ENCODE measurements at regions of chr2 and their contacts with region 1.

Region 1: GRCh38 chr2:161223139-161223732 is 63.0 kb downstream of the TANK start:
- DNase-seq: peak in 4 of 9 experiments; percentile 20 to 69 (median 44)
- ATAC-seq: peak; percentile 87
- H3K4me3 ChIP-seq: no peak overlapping the region
- H3K4me3 Mint-ChIP-seq: no peak overlapping the region
- H3K27ac ChIP-seq: no peak overlapping the region
- H3K27ac Mint-ChIP-seq: no peak overlapping the region
- H3K4me1 ChIP-seq: no peaks in the 10 kb centered on the region
- H3K4me1 Mint-ChIP-seq: no peaks in the 10 kb centered on the region
- H3K27me3 ChIP-seq: no peaks in the 10 kb centered on the region
- H3K27me3 Mint-ChIP-seq: no peaks in the 10 kb centered on the region
- CTCF ChIP-seq: peak; percentile 94

Region 2: DNA sequence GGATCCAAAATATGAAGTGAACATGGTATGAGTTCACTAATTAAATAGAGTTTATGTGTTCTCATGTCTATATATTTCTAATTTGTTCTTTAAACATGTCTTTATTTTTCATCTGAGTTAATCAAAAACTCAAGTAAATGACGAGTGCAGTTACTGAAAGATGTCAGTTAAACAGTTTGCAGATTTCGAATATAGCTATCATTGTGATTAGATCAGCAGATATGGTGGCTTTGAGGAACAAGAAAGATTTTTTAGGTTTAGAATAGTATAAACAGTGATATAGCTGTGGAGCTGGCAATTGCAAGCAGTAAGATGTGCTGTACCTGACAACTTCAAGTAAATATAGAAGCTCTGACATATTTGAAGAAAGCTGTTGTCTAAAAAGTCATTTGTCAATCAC is 13.3 kb before region 1 on chr2:
- CTCF ChIA-PET with region 1: interaction called, 4 read pairs
- POLR2A ChIA-PET with region 1: no interaction called
- intact Hi-C with region 1: loop called in 1 of 2 experiments (anchors 2 kb)
- DNase-seq: no peak
- ATAC-seq: no peak
- H3K4me3 ChIP-seq: no peak overlapping the region
- H3K4me3 Mint-ChIP-seq: no peak overlapping the region
- H3K27ac ChIP-seq: no peak overlapping the region
- H3K27ac Mint-ChIP-seq: no peak overlapping the region
- H3K4me1 ChIP-seq: no peaks in the 10 kb centered on the region
- H3K4me1 Mint-ChIP-seq: peaks cover 3% of the 10 kb centered on the region
- H3K27me3 ChIP-seq: no peaks in the 10 kb centered on the region
- H3K27me3 Mint-ChIP-seq: no peaks in the 10 kb centered on the region
- CTCF ChIP-seq: no peak

Region 3: GRCh38 chr2:161238560-161239325 is 15.5 kb after region 1 on chr2:
- CTCF ChIA-PET with region 1: interaction called, 9 read pairs
- POLR2A ChIA-PET with region 1: no interaction called
- intact Hi-C with region 1: loop called in 1 of 2 experiments (anchors 1 kb)
- DNase-seq: peak; percentile 18 to 74 (median 68)
- ATAC-seq: peak; percentile 71
- H3K4me3 ChIP-seq: peak overlapping the region; percentile 56 to 64
- H3K4me3 Mint-ChIP-seq: peak overlapping the region; percentile 92
- H3K27ac ChIP-seq: no peak overlapping the region
- H3K27ac Mint-ChIP-seq: peak overlapping the region; percentile 78
- H3K4me1 ChIP-seq: peaks cover 16% of the 10 kb centered on the region
- H3K4me1 Mint-ChIP-seq: peaks cover 49% of the 10 kb centered on the region
- H3K27me3 ChIP-seq: peaks cover 0 to 4% of the 10 kb centered on the region in 2 experiments
- H3K27me3 Mint-ChIP-seq: peaks cover 2% of the 10 kb centered on the region
- CTCF ChIP-seq: no peak

Region 4: GRCh38 chr2:161273038-161273760 is 50.0 kb after region 1 on chr2:
- CTCF ChIA-PET with region 1: interaction called, 73 read pairs
- POLR2A ChIA-PET with region 1: no interaction called
- intact Hi-C with region 1: loop called (anchors 1 kb)
- DNase-seq: peak in 3 of 9 experiments; percentile 51 to 77 (median 72)
- ATAC-seq: peak; percentile 69
- H3K4me3 ChIP-seq: no peak overlapping the region
- H3K4me3 Mint-ChIP-seq: no peak overlapping the region
- H3K27ac ChIP-seq: no peak overlapping the region
- H3K27ac Mint-ChIP-seq: no peak overlapping the region
- H3K4me1 ChIP-seq: no peaks in the 10 kb centered on the region
- H3K4me1 Mint-ChIP-seq: no peaks in the 10 kb centered on the region
- H3K27me3 ChIP-seq: peaks cover 0 to 2% of the 10 kb centered on the region in 2 experiments
- H3K27me3 Mint-ChIP-seq: peaks cover 7% of the 10 kb centered on the region
- CTCF ChIP-seq: peak; percentile 90

Region 5: GRCh38 chr2:161946489-161947107 is 723.4 kb after region 1 on chr2:
- CTCF ChIA-PET with region 1: no interaction called
- POLR2A ChIA-PET with region 1: no interaction called
- intact Hi-C with region 1: loop called (anchors 5 to 10 kb)
- DNase-seq: peak in 2 of 9 experiments; percentile 35 to 38
- ATAC-seq: no peak
- H3K4me3 ChIP-seq: no peak overlapping the region
- H3K4me3 Mint-ChIP-seq: no peak overlapping the region
- H3K27ac ChIP-seq: no peak overlapping the region
- H3K27ac Mint-ChIP-seq: no peak overlapping the region
- H3K4me1 ChIP-seq: no peaks in the 10 kb centered on the region
- H3K4me1 Mint-ChIP-seq: peaks cover 3% of the 10 kb centered on the region
- H3K27me3 ChIP-seq: no peaks in the 10 kb centered on the region
- H3K27me3 Mint-ChIP-seq: no peaks in the 10 kb centered on the region
- CTCF ChIP-seq: peak; percentile 66